ENCODE measurements at regions of chr15 and their contacts with region 1.

Region 1: GRCh38 chr15:66323312-66323928 is 30.1 kb downstream of the DIS3L start:
- DNase-seq: no peak
- H3K4me3 ChIP-seq: no peak overlapping the region
- H3K27ac ChIP-seq: no peak overlapping the region
- H3K4me1 ChIP-seq: no peaks in the 10 kb centered on the region
- H3K27me3 ChIP-seq: no peaks in the 10 kb centered on the region
- CTCF ChIP-seq: no peak
- POLR2A ChIP-seq: no peak

Region 2: DNA sequence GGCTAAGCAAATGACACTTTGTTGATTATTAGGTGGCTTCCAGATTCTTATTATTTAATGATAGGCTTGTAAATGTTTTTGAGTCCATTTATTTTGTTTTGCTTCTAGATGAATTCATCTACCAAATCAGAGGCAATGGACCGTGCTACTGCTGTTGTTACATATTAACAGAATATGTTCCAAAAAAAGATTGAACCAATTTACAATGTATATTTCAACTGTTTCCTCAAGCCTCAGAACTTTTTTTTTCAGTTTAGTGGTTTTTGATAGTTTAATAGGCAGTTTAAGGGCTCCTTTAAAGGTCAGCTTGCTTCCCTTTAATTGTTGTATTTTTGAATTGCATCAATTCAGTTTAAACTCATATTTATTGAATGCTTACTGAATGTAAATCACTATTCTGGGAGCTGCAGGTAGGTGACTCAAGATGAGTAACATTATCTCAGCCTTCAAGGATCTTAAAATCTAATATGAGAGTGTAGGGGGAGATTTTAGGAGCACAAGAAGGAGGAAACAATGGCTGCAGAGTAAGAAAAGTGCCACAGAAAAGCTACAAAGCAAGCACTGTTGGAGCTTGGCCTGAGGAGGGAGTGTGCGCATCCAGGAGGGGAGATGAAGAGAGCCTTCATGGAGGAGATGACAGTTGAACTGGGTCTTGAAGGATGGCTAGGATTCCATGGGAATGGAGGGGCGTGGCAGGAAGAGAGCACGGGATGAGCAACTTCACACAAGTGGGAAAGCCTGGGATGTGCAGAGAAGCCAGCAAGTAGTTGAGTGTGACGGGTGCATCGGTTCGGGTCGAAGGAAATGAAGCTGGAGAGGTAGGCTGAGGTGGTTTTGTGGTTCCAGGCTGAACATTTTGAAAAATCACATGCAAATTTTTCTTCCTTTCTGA is 78.0 kb after region 1 on chr15:
- CTCF ChIA-PET with region 1: no interaction called
- POLR2A ChIA-PET with region 1: no interaction called
- dilution Hi-C with region 1: loop called (anchors 25 kb)
- intact Hi-C with region 1: no loop called
- DNase-seq: no peak
- H3K4me3 ChIP-seq: no peak overlapping the region
- H3K27ac ChIP-seq: no peak overlapping the region
- H3K4me1 ChIP-seq: peaks cover 31% of the 10 kb centered on the region
- H3K27me3 ChIP-seq: no peaks in the 10 kb centered on the region
- CTCF ChIP-seq: no peak
- POLR2A ChIP-seq: no peak